IMR-90 (cell line): ENCODE measurements at regions of chr19 and their contacts with region 1.

Region 1: GRCh38 chr19:4120933-4121612 is 2.8 kb downstream of the MAP2K2 start:
- DNase-seq: no peak
- ATAC-seq: no peak
- H3K4me3 ChIP-seq: no peak overlapping the region
- H3K27ac ChIP-seq: no peak overlapping the region
- H3K4me1 ChIP-seq: peaks cover 12% of the 10 kb centered on the region
- H3K27me3 ChIP-seq: no peaks in the 10 kb centered on the region
- CTCF ChIP-seq: no peak
- POLR2A ChIP-seq: no peak
- RAD21 ChIP-seq: no peak

Region 2: DNA sequence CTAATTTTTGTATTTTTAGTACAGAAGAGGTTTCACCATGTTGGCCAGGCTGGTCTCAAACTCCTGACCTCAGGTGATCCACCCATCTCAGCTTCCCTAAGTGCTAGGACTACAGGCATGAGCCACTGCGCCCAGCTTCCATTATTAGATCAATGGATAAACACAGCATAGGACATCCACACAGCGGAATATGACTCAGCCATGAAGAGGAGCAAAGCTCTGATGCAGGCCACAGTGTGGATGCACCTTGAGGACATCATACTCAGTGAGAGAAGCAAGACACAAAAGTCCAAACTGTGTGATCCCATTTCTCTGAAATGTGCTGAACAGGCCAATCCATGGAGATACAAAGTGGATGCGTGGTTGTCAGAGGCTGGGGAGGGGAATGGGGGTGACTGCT is 49.5 kb before region 1 on chr19:
- CTCF ChIA-PET with region 1: no interaction called
- POLR2A ChIA-PET with region 1: no interaction called
- dilution Hi-C with region 1: no loop called
- in situ Hi-C with region 1: no loop called
- intact Hi-C with region 1: loop called (anchors 1 kb)
- DNase-seq: no peak
- ATAC-seq: no peak
- H3K4me3 ChIP-seq: no peak overlapping the region
- H3K27ac ChIP-seq: no peak overlapping the region
- H3K4me1 ChIP-seq: no peaks in the 10 kb centered on the region; the same call in 1 of the 2 replicates
- H3K27me3 ChIP-seq: no peaks in the 10 kb centered on the region
- CTCF ChIP-seq: no peak
- POLR2A ChIP-seq: no peak
- RAD21 ChIP-seq: no peak